CD4-positive, alpha-beta memory T cell (primary cell): ENCODE measurements at regions of chr2 and their contacts with region 1.

Region 1: GRCh38 chr2:71068218-71069035 is at the start of gene NAGK:
- DNase-seq: peak; percentile 98 to 100 (median 99)
- H3K4me3 ChIP-seq: peak within 1 kb of the TSS; percentile 90 to 96
- H3K4me3 Mint-ChIP-seq: peak within 1 kb of the TSS; percentile 95 to 98 (median 97)
- H3K27ac ChIP-seq: peak within 1 kb of the TSS; percentile 94
- H3K27ac Mint-ChIP-seq: peak within 1 kb of the TSS; percentile 97 to 100 (median 99)
- H3K4me1 ChIP-seq: peaks cover 58% of the 10 kb centered on the region
- H3K4me1 Mint-ChIP-seq: peaks cover 42 to 69% (median 53%) of the 10 kb centered on the region in 4 donors
- H3K27me3 ChIP-seq: no peaks in the 10 kb centered on the region
- H3K27me3 Mint-ChIP-seq: no peaks in the 10 kb centered on the region
- total RNA-seq, gene NAGK: 161 to 167 TPM

Region 2: DNA sequence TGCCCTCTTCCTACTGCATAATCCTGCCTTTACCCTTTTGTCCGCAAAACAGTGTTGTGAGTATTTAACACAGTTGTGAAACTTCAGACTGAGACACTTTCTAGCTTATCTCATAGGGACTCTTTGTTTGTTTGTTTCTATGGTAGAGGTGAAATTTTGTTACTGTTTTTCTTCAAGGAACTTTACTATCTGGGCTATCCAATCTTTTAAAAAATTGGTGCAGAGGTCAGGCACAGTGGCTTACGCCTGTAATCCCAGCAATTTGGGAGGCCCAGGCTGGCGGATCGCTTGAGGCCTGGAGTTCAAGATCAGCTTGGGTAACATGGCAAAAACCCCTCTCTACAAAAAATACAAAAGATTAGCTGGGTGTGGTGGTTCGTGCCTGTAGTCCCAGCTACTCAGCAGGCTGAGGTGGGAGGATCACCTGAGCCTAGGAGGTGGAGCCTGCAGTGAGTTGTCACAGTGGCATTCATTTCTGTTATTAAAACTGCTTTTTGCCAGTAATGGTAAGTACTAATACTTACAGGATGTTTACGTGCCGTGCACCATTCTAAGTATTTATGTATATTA is 1220.1 kb before region 1 on chr2:
- CTCF ChIA-PET with region 1: no interaction called
- POLR2A ChIA-PET with region 1: no interaction called
- intact Hi-C with region 1: no loop called
- DNase-seq: no peak
- H3K4me3 ChIP-seq: no peak overlapping the region
- H3K4me3 Mint-ChIP-seq: no peak overlapping the region
- H3K27ac ChIP-seq: no peak overlapping the region
- H3K27ac Mint-ChIP-seq: peak overlapping the region in 1 of 7 donors; percentile 15
- H3K4me1 ChIP-seq: no peaks in the 10 kb centered on the region
- H3K4me1 Mint-ChIP-seq: no peaks in the 10 kb centered on the region
- H3K27me3 ChIP-seq: no peaks in the 10 kb centered on the region
- H3K27me3 Mint-ChIP-seq: no peaks in the 10 kb centered on the region

Region 3: GRCh38 chr2:70994756-70995729 is 73.4 kb before region 1 on chr2 and contains the start of gene TEX261:
- CTCF ChIA-PET with region 1: interaction called, 3 read pairs
- POLR2A ChIA-PET with region 1: interaction called, 6 read pairs
- intact Hi-C with region 1: loop called (anchors 1 kb)
- DNase-seq: peak; percentile 88 to 91 (median 89)
- H3K4me3 ChIP-seq: peak within 1 kb of the TSS; percentile 68 to 87
- H3K4me3 Mint-ChIP-seq: peak within 1 kb of the TSS; percentile 95 to 99 (median 96)
- H3K27ac ChIP-seq: peak within 1 kb of the TSS; percentile 81
- H3K27ac Mint-ChIP-seq: peak within 1 kb of the TSS; percentile 91 to 98 (median 95)
- H3K4me1 ChIP-seq: peaks cover 26% of the 10 kb centered on the region
- H3K4me1 Mint-ChIP-seq: peaks cover 24 to 40% (median 32%) of the 10 kb centered on the region in 4 donors
- H3K27me3 ChIP-seq: no peaks in the 10 kb centered on the region
- H3K27me3 Mint-ChIP-seq: no peaks in the 10 kb centered on the region
- total RNA-seq, gene TEX261: 61.1 to 70.0 TPM

Region 4: GRCh38 chr2:71043531-71044407 is 24.7 kb before region 1 on chr2:
- CTCF ChIA-PET with region 1: no interaction called
- POLR2A ChIA-PET with region 1: no interaction called
- intact Hi-C with region 1: no loop called
- DNase-seq: no peak
- H3K4me3 ChIP-seq: no peak overlapping the region
- H3K4me3 Mint-ChIP-seq: no peak overlapping the region
- H3K27ac ChIP-seq: no peak overlapping the region
- H3K27ac Mint-ChIP-seq: no peak overlapping the region
- H3K4me1 ChIP-seq: no peaks in the 10 kb centered on the region
- H3K4me1 Mint-ChIP-seq: no peaks in the 10 kb centered on the region
- H3K27me3 ChIP-seq: peaks cover 5% of the 10 kb centered on the region
- H3K27me3 Mint-ChIP-seq: peaks cover 8% of the 10 kb centered on the region in 2 donors

Region 5: DNA sequence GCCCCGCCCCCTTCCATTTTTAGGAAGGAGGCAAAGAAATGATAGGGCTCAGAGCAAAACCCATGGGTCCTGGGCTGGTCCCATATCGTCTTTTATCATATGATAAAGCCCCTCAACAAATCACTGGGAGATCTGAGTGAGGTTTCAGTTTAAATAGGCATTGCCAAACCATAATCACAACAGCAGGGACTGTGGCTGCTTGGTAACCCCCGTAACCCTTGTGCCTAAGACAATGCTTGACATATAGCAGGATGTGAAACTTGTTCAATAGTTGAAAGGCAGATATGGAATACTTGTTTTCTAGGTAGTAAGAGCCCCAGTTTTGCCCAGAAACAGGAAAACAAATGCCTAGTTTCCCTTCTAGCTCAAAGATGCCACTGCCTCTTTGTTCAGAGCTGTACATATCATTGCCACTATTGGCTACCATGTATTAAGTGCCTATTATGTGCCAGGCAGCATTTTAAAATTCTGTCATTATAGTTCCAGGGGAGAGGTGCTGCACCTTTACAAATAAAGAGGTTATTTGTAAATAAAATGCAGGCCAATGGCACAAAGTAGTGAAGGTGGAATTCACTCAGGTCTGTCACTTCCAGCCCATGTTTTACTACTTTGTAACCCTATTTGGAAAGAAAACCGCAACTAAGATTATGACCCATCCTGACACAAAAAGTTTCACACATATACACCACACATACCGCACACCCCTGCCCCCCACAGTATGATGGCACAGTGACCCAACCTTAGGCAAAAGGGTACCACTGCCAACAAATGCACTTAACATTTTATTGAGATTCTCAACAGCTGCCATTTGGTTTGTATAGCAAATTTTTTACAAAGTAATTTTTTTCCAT is 14.2 kb after region 1 on chr2:
- CTCF ChIA-PET with region 1: interaction called, 7 read pairs
- POLR2A ChIA-PET with region 1: interaction called, 40 read pairs
- intact Hi-C with region 1: no loop called
- DNase-seq: peak in 1 of 5 donors; percentile 53
- H3K4me3 ChIP-seq: no peak overlapping the region
- H3K4me3 Mint-ChIP-seq: peak overlapping the region in 4 of 8 donors; percentile 21 to 50 (median 26)
- H3K27ac ChIP-seq: no peak overlapping the region
- H3K27ac Mint-ChIP-seq: peak overlapping the region in 6 of 7 donors; percentile 2 to 84 (median 46)
- H3K4me1 ChIP-seq: peaks cover 10% of the 10 kb centered on the region
- H3K4me1 Mint-ChIP-seq: peaks cover 6 to 22% (median 16%) of the 10 kb centered on the region in 4 donors
- H3K27me3 ChIP-seq: no peaks in the 10 kb centered on the region
- H3K27me3 Mint-ChIP-seq: peaks cover 0 to 5% of the 10 kb centered on the region in 2 donors

Region 6: GRCh38 chr2:71130113-71130904 is 61.9 kb after region 1 on chr2 and contains the starts of genes MCEE and MPHOSPH10:
- CTCF ChIA-PET with region 1: interaction called, 18 read pairs
- POLR2A ChIA-PET with region 1: interaction called, 154 read pairs
- intact Hi-C with region 1: loop called (anchors 1 kb)
- DNase-seq: peak; percentile 88 to 92 (median 90)
- H3K4me3 ChIP-seq: peak within 1 kb of the TSS; percentile 88 to 91
- H3K4me3 Mint-ChIP-seq: no peak within 1 kb of the TSS
- H3K27ac ChIP-seq: peak within 1 kb of the TSS; percentile 77
- H3K27ac Mint-ChIP-seq: no peak within 1 kb of the TSS
- H3K4me1 ChIP-seq: peaks cover 38% of the 10 kb centered on the region
- H3K4me1 Mint-ChIP-seq: peaks cover 11 to 22% (median 15%) of the 10 kb centered on the region in 4 donors
- H3K27me3 ChIP-seq: no peaks in the 10 kb centered on the region
- H3K27me3 Mint-ChIP-seq: no peaks in the 10 kb centered on the region
- total RNA-seq, gene MCEE: 27.1 to 30.0 TPM
- total RNA-seq, gene MPHOSPH10: 50.6 to 54.2 TPM

Region 7: GRCh38 chr2:71276311-71277146 is 208.1 kb after region 1 on chr2:
- CTCF ChIA-PET with region 1: no interaction called
- POLR2A ChIA-PET with region 1: no interaction called
- intact Hi-C with region 1: loop called (anchors 1 kb)
- DNase-seq: peak; percentile 77 to 84 (median 82)
- H3K4me3 ChIP-seq: peak overlapping the region; percentile 41 to 42
- H3K4me3 Mint-ChIP-seq: peak overlapping the region; percentile 63 to 79 (median 74)
- H3K27ac ChIP-seq: no peak overlapping the region
- H3K27ac Mint-ChIP-seq: peak overlapping the region in 1 of 7 donors; percentile 32
- H3K4me1 ChIP-seq: peaks cover 18% of the 10 kb centered on the region
- H3K4me1 Mint-ChIP-seq: peaks cover 6 to 13% (median 9%) of the 10 kb centered on the region in 4 donors
- H3K27me3 ChIP-seq: peaks cover 29% of the 10 kb centered on the region
- H3K27me3 Mint-ChIP-seq: peaks cover 62% of the 10 kb centered on the region in 2 donors

Region 8: DNA sequence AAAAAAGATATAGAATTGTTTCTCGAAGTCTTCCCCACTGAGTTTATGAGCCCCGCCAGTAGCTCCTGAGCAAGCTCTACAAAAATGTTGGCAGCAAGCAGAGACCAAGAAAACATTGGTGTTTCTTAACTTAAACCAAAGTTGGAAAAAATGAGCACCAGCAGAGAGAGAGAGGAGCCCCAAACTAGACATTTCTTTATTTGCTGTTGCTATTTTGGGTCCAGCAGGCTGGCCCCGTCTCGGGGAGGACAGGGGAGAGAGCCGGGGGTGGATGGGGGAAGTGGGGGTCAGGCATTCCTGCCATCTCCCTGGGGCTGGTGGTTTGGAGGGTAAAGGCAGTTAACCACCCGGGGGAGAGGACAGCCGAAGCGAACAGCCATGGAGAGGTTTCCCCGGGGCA is 497.9 kb after region 1 on chr2:
- CTCF ChIA-PET with region 1: no interaction called
- POLR2A ChIA-PET with region 1: no interaction called
- intact Hi-C with region 1: no loop called
- DNase-seq: no peak
- H3K4me3 ChIP-seq: no peak overlapping the region
- H3K4me3 Mint-ChIP-seq: no peak overlapping the region
- H3K27ac ChIP-seq: no peak overlapping the region
- H3K27ac Mint-ChIP-seq: no peak overlapping the region
- H3K4me1 ChIP-seq: no peaks in the 10 kb centered on the region
- H3K4me1 Mint-ChIP-seq: no peaks in the 10 kb centered on the region
- H3K27me3 ChIP-seq: no peaks in the 10 kb centered on the region
- H3K27me3 Mint-ChIP-seq: no peaks in the 10 kb centered on the region